Left ventricle myocardium superior (tissue), 1 donor: ENCODE measurements at regions of chr3 and their contacts with region 1.

Region 1: DNA sequence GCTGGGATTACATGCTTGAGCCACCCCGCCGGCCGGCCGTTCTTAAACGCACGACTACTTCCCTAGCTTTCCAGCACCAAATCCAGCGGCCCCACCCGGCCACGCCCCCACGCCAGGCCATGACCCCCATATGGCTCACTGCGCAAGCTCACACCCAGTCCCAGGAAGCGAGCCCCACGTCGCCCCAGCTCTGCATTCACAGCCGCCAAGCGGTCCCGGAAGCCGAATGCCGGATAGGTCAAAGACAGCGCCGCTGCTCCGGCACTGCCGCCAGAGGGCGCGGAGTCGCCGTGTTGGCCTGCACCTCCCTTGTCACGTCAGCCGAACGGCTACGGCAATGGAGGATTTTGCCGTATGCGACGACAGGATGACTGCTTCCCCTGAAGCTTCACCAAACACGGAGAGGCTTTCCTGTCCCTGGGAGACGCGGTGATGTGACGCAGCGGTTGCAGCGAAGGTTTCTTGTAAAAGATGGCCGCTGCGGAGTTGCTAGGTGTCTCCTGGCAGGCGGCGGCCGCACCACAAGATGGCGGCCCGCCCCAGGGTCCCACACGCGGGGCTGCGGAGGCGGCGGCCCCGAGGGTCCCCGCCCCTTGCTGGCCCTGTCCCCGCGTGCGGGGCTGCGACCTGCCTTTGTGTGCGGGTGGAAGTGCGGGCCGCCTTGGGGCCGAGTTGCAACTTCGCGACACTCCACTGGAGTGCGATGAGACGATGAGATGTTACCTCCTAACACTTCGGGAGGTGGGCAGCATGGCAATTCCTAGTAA is 30.2 kb upstream of the RPN1 start:
- DNase-seq: peak; percentile 100
- ATAC-seq: peak; percentile 99

Region 2: GRCh38 chr3:128794770-128795649 is 114.2 kb after region 1 on chr3:
- intact Hi-C with region 1: loop called (anchors 5 kb)
- DNase-seq: peak; percentile 39
- ATAC-seq: peak; percentile 90